A673 (cell line): ENCODE measurements at regions of chr3 and their contacts with region 1.

Region 1: GRCh38 chr3:190526787-190527762 is 13.2 kb downstream of the IL1RAP start:
- DNase-seq: peak; percentile 68
- H3K4me3 ChIP-seq: peak overlapping the region; percentile 16
- H3K27ac ChIP-seq: peak overlapping the region; percentile 83
- H3K4me1 ChIP-seq: peaks cover 88% of the 10 kb centered on the region
- H3K27me3 ChIP-seq: no peaks in the 10 kb centered on the region
- CTCF ChIP-seq: no peak

Region 2: DNA sequence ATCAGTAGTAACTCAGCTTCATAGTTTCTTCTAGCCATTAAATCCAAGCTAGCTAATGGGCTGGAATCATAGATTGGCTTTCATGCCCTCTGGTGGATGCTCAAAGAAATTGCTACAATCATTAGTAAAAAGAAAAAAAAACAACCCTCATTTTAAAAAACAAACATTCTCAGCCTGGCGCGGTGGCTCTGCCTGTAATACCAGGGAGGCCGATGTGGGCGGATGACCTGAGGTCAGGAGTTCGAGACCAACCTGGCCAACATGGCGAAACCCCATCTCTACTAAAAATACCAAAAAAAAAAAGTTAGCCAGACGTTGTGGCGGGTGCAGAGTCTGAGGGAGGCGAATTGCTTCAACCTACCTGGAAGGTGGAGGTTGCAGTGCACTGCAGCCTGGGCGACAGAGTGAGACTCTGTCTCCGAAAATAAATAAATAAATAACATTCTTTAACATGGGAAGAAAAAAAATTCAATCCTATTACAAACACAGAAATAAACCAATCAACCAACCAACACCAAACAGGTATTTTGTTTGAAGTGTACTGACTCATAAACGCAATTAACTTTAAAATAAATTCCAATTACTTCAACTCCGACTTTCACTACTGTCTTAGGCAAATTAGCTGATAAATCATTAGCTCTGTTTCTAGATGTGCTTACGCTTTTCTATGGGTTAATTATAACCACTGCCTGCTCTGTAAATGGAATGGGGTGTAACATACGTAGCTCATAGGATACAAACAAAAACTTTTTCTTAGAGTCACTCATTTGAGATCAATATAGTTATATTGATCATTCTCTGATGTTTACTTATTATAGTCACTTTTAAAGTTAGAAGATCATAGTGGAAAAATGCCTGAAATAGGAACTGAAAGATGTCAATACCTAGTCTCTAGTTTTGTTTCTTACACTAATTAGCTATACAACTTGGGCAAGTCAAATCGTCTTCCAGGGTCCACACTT is 102.3 kb before region 1 on chr3:
- CTCF ChIA-PET with region 1: no interaction called
- POLR2A ChIA-PET with region 1: no interaction called
- intact Hi-C with region 1: no loop called
- DNase-seq: peak; percentile 84
- H3K4me3 ChIP-seq: no peak overlapping the region
- H3K27ac ChIP-seq: no peak overlapping the region
- H3K4me1 ChIP-seq: peaks cover 8% of the 10 kb centered on the region
- H3K27me3 ChIP-seq: no peaks in the 10 kb centered on the region
- CTCF ChIP-seq: peak; percentile 75

Region 3: GRCh38 chr3:190497811-190498210 is 29.3 kb before region 1 on chr3:
- CTCF ChIA-PET with region 1: no interaction called
- POLR2A ChIA-PET with region 1: interaction called, 14 read pairs
- intact Hi-C with region 1: no loop called
- DNase-seq: peak; percentile 59
- H3K4me3 ChIP-seq: no peak overlapping the region
- H3K27ac ChIP-seq: no peak overlapping the region
- H3K4me1 ChIP-seq: peaks cover 49% of the 10 kb centered on the region
- H3K27me3 ChIP-seq: no peaks in the 10 kb centered on the region
- CTCF ChIP-seq: no peak

Region 4: GRCh38 chr3:191005790-191006189 is 478.7 kb after region 1 on chr3:
- CTCF ChIA-PET with region 1: no interaction called
- POLR2A ChIA-PET with region 1: no interaction called
- intact Hi-C with region 1: no loop called
- DNase-seq: no peak
- H3K4me3 ChIP-seq: no peak overlapping the region
- H3K27ac ChIP-seq: peak overlapping the region; percentile 22
- H3K4me1 ChIP-seq: peaks cover 37% of the 10 kb centered on the region
- H3K27me3 ChIP-seq: no peaks in the 10 kb centered on the region
- CTCF ChIP-seq: no peak